ENCODE measurements at regions of chr1 and their contacts with region 1.

Region 1: GRCh38 chr1:155063550-155064110 is at the start of gene EFNA4:
- DNase-seq: peak; percentile 62 to 87 (median 86)
- ATAC-seq: peak; percentile 93
- H3K4me3 ChIP-seq: peak within 1 kb of the TSS; percentile 76
- H3K4me3 Mint-ChIP-seq: peak within 1 kb of the TSS; percentile 85 to 99 (median 95)
- H3K27ac ChIP-seq: peak within 1 kb of the TSS; percentile 69
- H3K27ac Mint-ChIP-seq: peak within 1 kb of the TSS; percentile 17 to 96 (median 83)
- H3K4me1 ChIP-seq: peaks cover 20 to 21% of the 10 kb centered on the region in 2 donors
- H3K4me1 Mint-ChIP-seq: peaks cover 21 to 42% (median 39%) of the 10 kb centered on the region in 7 donors
- H3K27me3 ChIP-seq: no peaks in the 10 kb centered on the region
- H3K27me3 Mint-ChIP-seq: no peaks in the 10 kb centered on the region
- total RNA-seq, gene EFNA4: 3.9 to 9.4 (median 7.7) TPM

Region 2: GRCh38 chr1:154627257-154628120 is 436.1 kb before region 1 on chr1:
- CTCF ChIA-PET with region 1: no interaction called
- POLR2A ChIA-PET with region 1: no interaction called
- intact Hi-C with region 1: loop called in 1 of 2 experiments (anchors 5 kb)
- DNase-seq: peak; percentile 78 to 92 (median 90)
- ATAC-seq: peak; percentile 81
- H3K4me3 ChIP-seq: peak overlapping the region; percentile 72
- H3K4me3 Mint-ChIP-seq: peak overlapping the region; percentile 85 to 100 (median 94)
- H3K27ac ChIP-seq: peak overlapping the region; percentile 99
- H3K27ac Mint-ChIP-seq: peak overlapping the region; percentile 98 to 100 (median 99)
- H3K4me1 ChIP-seq: peaks cover 15% of the 10 kb centered on the region in 2 donors
- H3K4me1 Mint-ChIP-seq: peaks cover 20 to 54% (median 44%) of the 10 kb centered on the region in 7 donors
- H3K27me3 ChIP-seq: no peaks in the 10 kb centered on the region
- H3K27me3 Mint-ChIP-seq: peaks cover 0 to 20% (median 7%) of the 10 kb centered on the region in 5 donors

Region 3: DNA sequence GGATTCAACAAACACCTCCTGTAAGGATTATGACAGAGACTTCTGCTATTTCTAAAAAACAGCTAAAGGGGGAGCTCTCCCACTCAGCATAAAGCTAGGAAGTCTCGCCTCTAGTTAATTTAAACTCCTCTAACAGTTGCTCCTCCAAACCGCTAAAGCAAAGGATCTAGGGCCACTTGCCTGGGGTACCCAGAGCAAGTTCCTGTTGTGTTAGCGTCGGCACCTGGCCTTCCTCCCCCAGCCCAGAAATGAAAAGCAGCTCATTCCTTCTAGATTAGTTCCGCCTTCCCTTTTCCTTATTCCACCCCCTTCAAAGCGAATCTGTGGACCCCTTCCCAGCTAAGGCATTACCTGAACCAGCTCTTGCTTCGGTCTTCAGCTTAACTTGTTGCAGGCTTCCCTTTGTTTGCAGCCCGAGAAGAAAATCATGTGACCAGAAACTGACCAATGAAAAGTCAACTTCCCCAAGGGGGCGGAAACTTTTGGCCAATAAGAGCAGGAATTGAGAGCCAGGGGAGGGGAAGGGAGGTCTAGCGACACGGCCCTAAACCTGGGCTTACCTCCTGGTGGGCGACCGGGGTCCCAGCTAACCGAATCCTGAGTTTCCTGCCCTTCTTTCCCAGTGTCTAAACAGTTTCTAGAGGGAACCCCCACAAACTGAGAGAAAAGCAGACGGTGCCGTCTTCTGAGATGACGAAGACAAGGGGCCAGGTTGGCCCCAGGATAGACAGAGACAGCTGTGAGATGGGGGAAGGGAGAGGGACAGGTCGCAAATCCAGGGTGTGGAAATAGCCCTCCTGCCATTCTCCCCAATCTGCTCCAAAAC is 107.7 kb before region 1 on chr1 and contains the start of gene PBXIP1:
- CTCF ChIA-PET with region 1: interaction called, 5 read pairs
- POLR2A ChIA-PET with region 1: interaction called, 3 read pairs
- intact Hi-C with region 1: loop called in 1 of 2 experiments (anchors 5 kb)
- DNase-seq: peak; percentile 56 to 95 (median 92)
- ATAC-seq: peak; percentile 58
- H3K4me3 ChIP-seq: peak within 1 kb of the TSS; percentile 92
- H3K4me3 Mint-ChIP-seq: peak within 1 kb of the TSS; percentile 92 to 99 (median 98)
- H3K27ac ChIP-seq: peak within 1 kb of the TSS; percentile 96
- H3K27ac Mint-ChIP-seq: peak within 1 kb of the TSS; percentile 97 to 100 (median 99)
- H3K4me1 ChIP-seq: peaks cover 53 to 54% of the 10 kb centered on the region in 2 donors
- H3K4me1 Mint-ChIP-seq: peaks cover 59 to 87% (median 76%) of the 10 kb centered on the region in 7 donors
- H3K27me3 ChIP-seq: no peaks in the 10 kb centered on the region
- H3K27me3 Mint-ChIP-seq: no peaks in the 10 kb centered on the region
- total RNA-seq, gene PBXIP1: 107 to 390 (median 383) TPM

Region 4: GRCh38 chr1:155001675-155002463 is 61.8 kb before region 1 on chr1:
- CTCF ChIA-PET with region 1: no interaction called
- POLR2A ChIA-PET with region 1: interaction called, 4 read pairs
- intact Hi-C with region 1: loop called (anchors 1 to 5 kb)
- DNase-seq: peak; percentile 90 to 98 (median 95)
- ATAC-seq: peak; percentile 87
- H3K4me3 ChIP-seq: peak overlapping the region; percentile 95
- H3K4me3 Mint-ChIP-seq: peak overlapping the region; percentile 90 to 100 (median 95)
- H3K27ac ChIP-seq: peak overlapping the region; percentile 88
- H3K27ac Mint-ChIP-seq: peak overlapping the region; percentile 70 to 99 (median 91)
- H3K4me1 ChIP-seq: peaks cover 23 to 40% of the 10 kb centered on the region in 2 donors
- H3K4me1 Mint-ChIP-seq: peaks cover 29 to 63% (median 55%) of the 10 kb centered on the region in 7 donors
- H3K27me3 ChIP-seq: no peaks in the 10 kb centered on the region
- H3K27me3 Mint-ChIP-seq: no peaks in the 10 kb centered on the region

Region 5: GRCh38 chr1:155050560-155051341 is 12.9 kb before region 1 on chr1 and contains the start of gene ADAM15:
- CTCF ChIA-PET with region 1: interaction called, 138 read pairs
- POLR2A ChIA-PET with region 1: interaction called, 7 read pairs
- intact Hi-C with region 1: loop called (anchors 1 kb)
- DNase-seq: peak; percentile 56 to 88 (median 74)
- ATAC-seq: peak; percentile 90
- H3K4me3 ChIP-seq: peak within 1 kb of the TSS; percentile 66
- H3K4me3 Mint-ChIP-seq: peak within 1 kb of the TSS; percentile 74 to 91 (median 88)
- H3K27ac ChIP-seq: peak within 1 kb of the TSS; percentile 72
- H3K27ac Mint-ChIP-seq: peak within 1 kb of the TSS in 8 of 9 donors; percentile 47 to 85 (median 70)
- H3K4me1 ChIP-seq: peaks cover 5 to 13% of the 10 kb centered on the region in 2 donors
- H3K4me1 Mint-ChIP-seq: peaks cover 14 to 31% (median 23%) of the 10 kb centered on the region in 7 donors
- H3K27me3 ChIP-seq: no peaks in the 10 kb centered on the region
- H3K27me3 Mint-ChIP-seq: no peaks in the 10 kb centered on the region
- total RNA-seq, gene ADAM15: 16.9 to 53.7 (median 28.8) TPM

Region 6: DNA sequence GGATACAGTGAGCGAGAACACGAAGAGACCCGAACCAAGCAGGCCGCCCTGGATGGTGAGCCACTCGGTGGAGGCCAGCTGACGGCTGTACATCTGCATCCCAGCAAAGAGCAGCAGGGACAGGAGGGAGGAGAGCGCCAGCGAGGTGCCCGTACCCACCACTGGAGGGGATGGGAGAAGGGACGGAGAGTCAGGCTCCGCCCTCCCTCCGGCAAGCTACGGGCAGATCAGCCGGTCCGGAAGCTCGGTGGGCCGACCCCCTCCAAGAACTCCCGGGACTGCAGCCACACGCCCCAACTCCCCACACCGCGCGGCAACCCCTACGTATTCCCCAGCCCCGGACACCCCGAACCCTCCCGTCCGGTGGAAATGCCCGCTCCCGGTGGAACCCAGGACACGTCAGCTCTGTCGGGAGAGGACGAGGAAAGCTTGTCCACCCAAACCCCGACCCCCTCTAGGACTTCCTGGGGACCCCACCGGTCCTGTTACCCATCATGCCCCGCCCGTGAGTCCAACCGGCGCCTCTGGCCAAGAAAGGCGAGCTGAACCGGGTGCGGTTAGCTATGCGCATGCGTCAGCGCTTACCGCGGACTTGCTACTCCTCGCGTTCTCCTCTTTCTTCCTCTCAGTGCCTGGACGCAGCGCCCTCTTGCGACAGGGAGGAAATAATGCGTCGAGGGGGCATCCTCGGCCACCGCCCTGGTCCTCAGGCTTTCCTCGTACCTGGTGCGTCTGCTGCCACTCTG is 109.3 kb after region 1 on chr1 and contains the start of gene KRTCAP2:
- CTCF ChIA-PET with region 1: interaction called, 5 read pairs
- POLR2A ChIA-PET with region 1: no interaction called
- intact Hi-C with region 1: loop called in 1 of 2 experiments (anchors 1 kb)
- DNase-seq: peak; percentile 89 to 93 (median 92)
- ATAC-seq: peak; percentile 91
- H3K4me3 ChIP-seq: peak within 1 kb of the TSS; percentile 90
- H3K4me3 Mint-ChIP-seq: peak within 1 kb of the TSS; percentile 94 to 100 (median 98)
- H3K27ac ChIP-seq: peak within 1 kb of the TSS; percentile 88
- H3K27ac Mint-ChIP-seq: peak within 1 kb of the TSS; percentile 95 to 99 (median 98)
- H3K4me1 ChIP-seq: peaks cover 11 to 18% of the 10 kb centered on the region in 2 donors
- H3K4me1 Mint-ChIP-seq: peaks cover 32 to 60% (median 47%) of the 10 kb centered on the region in 7 donors
- H3K27me3 ChIP-seq: no peaks in the 10 kb centered on the region
- H3K27me3 Mint-ChIP-seq: peaks cover 0 to 6% (median 0%) of the 10 kb centered on the region in 5 donors
- total RNA-seq, gene KRTCAP2: 97.4 to 236 (median 155) TPM

Measured in naive thymus-derived CD4-positive, alpha-beta T cell (primary cell).